ENCODE measurements at regions of chr12 and their contacts with region 1.

Region 1: DNA sequence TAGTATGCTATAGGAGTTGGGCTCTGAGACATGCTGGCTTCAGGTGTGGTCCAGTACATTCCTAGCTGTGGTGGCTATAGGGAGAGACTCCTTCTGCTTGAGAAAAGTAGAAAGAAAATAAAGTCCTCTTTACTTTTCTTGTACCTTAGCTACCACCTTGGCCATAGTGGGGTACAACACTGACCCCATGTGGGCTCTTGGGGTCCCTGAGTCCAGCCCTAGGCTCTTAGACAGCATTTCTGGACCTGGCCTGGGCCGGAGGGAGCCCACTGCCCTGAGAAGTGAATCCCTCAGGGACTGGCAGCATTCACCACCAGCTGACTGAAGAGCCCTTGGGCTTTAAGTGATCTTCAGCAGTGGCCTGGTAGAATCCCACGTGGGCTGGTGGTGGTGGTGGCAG is 143.1 kb downstream of the SYT10 start:
- DNase-seq: no peak
- H3K4me3 ChIP-seq: no peak overlapping the region
- H3K27ac ChIP-seq: no peak overlapping the region
- H3K4me1 ChIP-seq: no peaks in the 10 kb centered on the region
- H3K27me3 ChIP-seq: no peaks in the 10 kb centered on the region
- CTCF ChIP-seq: no peak
- POLR2A ChIP-seq: no peak

Region 2: GRCh38 chr12:32777159-32777558 is 519.4 kb before region 1 on chr12:
- intact Hi-C with region 1: loop called (anchors 10 kb)
- DNase-seq: no peak
- H3K4me3 ChIP-seq: no peak overlapping the region
- H3K27ac ChIP-seq: no peak overlapping the region
- H3K4me1 ChIP-seq: no peaks in the 10 kb centered on the region
- H3K27me3 ChIP-seq: no peaks in the 10 kb centered on the region
- CTCF ChIP-seq: no peak
- POLR2A ChIP-seq: no peak

Region 3: GRCh38 chr12:33370318-33370717 is 73.8 kb after region 1 on chr12:
- intact Hi-C with region 1: no loop called
- DNase-seq: no peak
- H3K4me3 ChIP-seq: no peak overlapping the region
- H3K27ac ChIP-seq: no peak overlapping the region
- H3K4me1 ChIP-seq: no peaks in the 10 kb centered on the region
- H3K27me3 ChIP-seq: no peaks in the 10 kb centered on the region
- CTCF ChIP-seq: no peak
- POLR2A ChIP-seq: no peak

Measured in breast epithelium (tissue), 4 donors.